ENCODE measurements at regions of chr7 and their contacts with region 1.

Region 1: GRCh38 chr7:96414931-96415292 is 93.0 kb upstream of the SLC25A13 start:
- DNase-seq: peak in 1 of 2 donors; percentile 10
- ATAC-seq: peak in 5 of 8 donors; percentile 46 to 65 (median 56)
- H3K4me3 ChIP-seq: no peak overlapping the region
- H3K27ac ChIP-seq: no peak overlapping the region
- H3K4me1 ChIP-seq: peaks cover 0 to 28% (median 5%) of the 10 kb centered on the region in 9 donors
- H3K27me3 ChIP-seq: no peaks in the 10 kb centered on the region
- CTCF ChIP-seq: peak; percentile 28 to 66 (median 51)

Region 2: DNA sequence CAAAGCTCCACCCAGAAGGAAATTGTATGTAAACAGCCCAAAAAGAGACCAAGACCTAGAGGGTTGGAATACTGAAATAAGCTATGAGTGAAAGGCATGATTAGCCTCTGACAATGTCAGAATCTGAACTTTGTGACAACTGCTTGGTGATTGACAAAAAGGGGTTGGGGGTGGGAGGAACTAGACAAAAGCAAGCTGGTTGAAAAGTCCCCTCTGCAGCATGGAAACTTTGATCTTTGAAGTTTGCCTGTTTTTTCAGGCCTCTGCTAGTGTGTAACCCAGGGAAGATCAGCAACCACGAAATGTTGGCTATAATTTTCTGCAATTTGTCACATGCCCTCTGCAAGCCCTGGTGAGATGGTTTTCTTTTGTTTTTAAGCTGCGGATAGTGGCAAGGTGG is 11.8 kb after region 1 on chr7:
- intact Hi-C with region 1: loop called in 1 of 10 experiments (anchors 1 kb)
- DNase-seq: no peak
- ATAC-seq: no peak
- H3K4me3 ChIP-seq: no peak overlapping the region
- H3K27ac ChIP-seq: no peak overlapping the region
- H3K4me1 ChIP-seq: no peaks in the 10 kb centered on the region
- H3K27me3 ChIP-seq: no peaks in the 10 kb centered on the region
- CTCF ChIP-seq: no peak

Region 3: GRCh38 chr7:96441436-96442084 is 26.6 kb after region 1 on chr7:
- intact Hi-C with region 1: no loop called
- DNase-seq: no peak
- ATAC-seq: peak in 3 of 8 donors; percentile 44 to 74 (median 69)
- H3K4me3 ChIP-seq: no peak overlapping the region
- H3K27ac ChIP-seq: peak overlapping the region in 1 of 10 donors; percentile 35
- H3K4me1 ChIP-seq: peaks cover 0 to 8% (median 0%) of the 10 kb centered on the region in 9 donors
- H3K27me3 ChIP-seq: no peaks in the 10 kb centered on the region
- CTCF ChIP-seq: no peak

Region 4: GRCh38 chr7:96691702-96692101 is 276.8 kb after region 1 on chr7:
- intact Hi-C with region 1: loop called in 1 of 10 experiments (anchors 10 kb)
- DNase-seq: no peak
- ATAC-seq: no peak
- H3K4me3 ChIP-seq: no peak overlapping the region
- H3K27ac ChIP-seq: no peak overlapping the region
- H3K4me1 ChIP-seq: peaks cover 0 to 72% (median 33%) of the 10 kb centered on the region in 9 donors
- H3K27me3 ChIP-seq: no peaks in the 10 kb centered on the region
- CTCF ChIP-seq: no peak

Region 5: DNA sequence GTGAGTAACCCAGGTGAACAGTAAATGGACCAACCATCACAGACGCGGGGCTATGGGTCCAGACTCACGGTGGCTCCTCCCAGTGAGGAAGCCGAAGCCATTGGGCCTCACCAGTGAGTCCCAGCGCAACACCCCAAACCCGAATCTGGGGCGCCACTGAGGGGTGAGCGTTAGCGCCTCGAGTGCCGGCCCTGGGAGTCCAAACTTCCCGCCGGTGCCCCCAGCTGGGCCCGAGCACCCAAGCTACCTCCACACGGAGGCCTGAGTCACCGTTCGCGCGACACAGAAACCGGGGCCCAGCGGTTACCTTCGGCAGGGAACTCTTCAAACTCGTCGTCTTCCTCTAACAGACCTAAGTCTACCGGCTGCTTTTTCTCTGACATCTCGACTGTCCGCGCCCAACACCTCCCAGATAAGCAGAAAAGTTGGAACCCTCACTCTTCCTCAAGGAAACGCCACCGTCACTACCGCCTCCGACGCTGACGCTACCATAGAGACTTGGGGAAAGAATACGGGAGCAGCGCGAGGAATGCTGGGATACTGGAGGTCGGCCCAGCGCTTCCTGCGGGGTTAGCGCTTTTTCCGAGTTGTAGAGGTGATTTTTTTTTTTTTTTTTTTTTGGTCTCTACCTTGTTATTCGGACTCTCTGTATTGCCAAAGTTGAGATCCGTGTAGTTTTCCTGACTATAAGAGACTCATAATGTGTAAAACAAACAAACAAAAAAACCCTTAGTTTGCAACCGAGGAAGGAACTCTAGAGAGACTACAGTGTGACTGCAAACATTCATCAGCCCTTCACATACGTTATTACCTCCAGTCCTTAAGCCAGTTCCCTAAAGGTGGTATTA is 294.7 kb after region 1 on chr7 and contains the start of gene SEM1:
- intact Hi-C with region 1: loop called in 2 of 10 experiments (anchors 10 kb)
- DNase-seq: peak; percentile 84 to 91
- ATAC-seq: peak; percentile 99 to 100 (median 100)
- H3K4me3 ChIP-seq: peak within 1 kb of the TSS; percentile 66 to 96 (median 84)
- H3K27ac ChIP-seq: peak within 1 kb of the TSS; percentile 70 to 94 (median 88)
- H3K4me1 ChIP-seq: peaks cover 5 to 34% (median 26%) of the 10 kb centered on the region in 9 donors
- H3K27me3 ChIP-seq: peaks cover 0 to under 1% (median 0%) of the 10 kb centered on the region in 7 donors
- CTCF ChIP-seq: no peak
- total RNA-seq, gene SEM1: 41.4 to 61.4 (median 51.8) TPM

Measured in heart right ventricle (tissue), 16 donors.